ENCODE measurements at regions of chr10 and their contacts with region 1.

Region 1: DNA sequence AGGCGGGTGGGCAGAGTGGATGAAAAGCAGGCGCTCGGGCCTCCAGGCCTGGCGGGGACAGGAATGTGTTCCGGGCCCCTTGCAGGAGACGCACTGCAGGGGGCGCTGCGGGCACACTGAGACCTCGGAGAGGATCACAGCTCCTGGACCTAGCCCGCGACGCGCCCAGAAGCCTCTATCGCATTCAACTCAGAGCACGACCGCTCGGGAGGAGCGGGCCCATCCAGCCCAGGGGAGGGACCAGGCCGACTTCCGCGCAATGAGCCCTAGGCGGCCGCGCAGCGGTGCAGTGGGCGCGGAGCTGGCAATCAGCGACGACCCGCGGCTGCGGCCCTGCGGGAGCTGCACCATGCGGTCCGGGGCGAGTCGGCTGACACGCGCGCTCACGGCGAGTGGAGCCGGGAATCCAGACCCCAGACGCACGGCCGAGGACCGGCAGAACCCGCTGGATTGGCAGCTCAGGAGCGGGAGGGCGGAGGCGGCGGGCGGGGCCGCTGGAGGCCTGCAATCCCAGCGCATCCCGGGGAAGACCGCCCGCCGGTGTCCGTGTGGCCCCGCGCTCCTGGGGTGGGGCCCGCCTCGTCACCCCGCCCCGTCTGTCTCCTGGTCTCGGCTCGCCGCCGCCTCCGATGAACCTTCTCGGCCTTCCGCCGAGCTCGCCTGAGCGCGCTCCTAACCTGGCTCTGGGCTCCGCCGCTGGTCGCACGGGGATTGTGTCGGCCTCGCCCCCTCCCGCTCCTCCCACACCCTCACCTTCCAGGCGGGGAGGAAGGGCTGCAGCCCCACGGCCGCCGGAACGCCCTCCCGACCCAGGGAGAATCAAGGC is 33.5 kb upstream of the GRID1 start:
- DNase-seq: peak; percentile 88
- H3K4me3 ChIP-seq: peak overlapping the region; percentile 29 to 57 (median 48)
- H3K27ac ChIP-seq: no peak overlapping the region
- H3K4me1 ChIP-seq: peaks cover 23% of the 10 kb centered on the region
- H3K27me3 ChIP-seq: peaks cover 18% of the 10 kb centered on the region in 2 experiments
- CTCF ChIP-seq: peak; percentile 92 to 98
- POLR2A ChIP-seq: no peak

Region 2: GRCh38 chr10:86389441-86390193 is 10.5 kb before region 1 on chr10:
- CTCF ChIA-PET with region 1: interaction called, 31 read pairs
- POLR2A ChIA-PET with region 1: no interaction called
- dilution Hi-C with region 1: no loop called
- intact Hi-C with region 1: no loop called
- DNase-seq: peak; percentile 29
- H3K4me3 ChIP-seq: peak overlapping the region in 1 of 3 experiments; percentile 7
- H3K27ac ChIP-seq: no peak overlapping the region
- H3K4me1 ChIP-seq: no peaks in the 10 kb centered on the region
- H3K27me3 ChIP-seq: peaks cover 21 to 23% of the 10 kb centered on the region in 2 experiments
- CTCF ChIP-seq: no peak
- POLR2A ChIP-seq: no peak

Region 3: GRCh38 chr10:86411281-86411841 is 11.3 kb after region 1 on chr10:
- CTCF ChIA-PET with region 1: interaction called, 53 read pairs
- POLR2A ChIA-PET with region 1: no interaction called
- dilution Hi-C with region 1: no loop called
- intact Hi-C with region 1: no loop called
- DNase-seq: peak; percentile 64
- H3K4me3 ChIP-seq: no peak overlapping the region
- H3K27ac ChIP-seq: peak overlapping the region; percentile 73
- H3K4me1 ChIP-seq: peaks cover 17% of the 10 kb centered on the region
- H3K27me3 ChIP-seq: peaks cover 0 to 2% of the 10 kb centered on the region in 2 experiments
- CTCF ChIP-seq: no peak
- POLR2A ChIP-seq: no peak

Region 4: GRCh38 chr10:86521678-86522509 is 121.8 kb after region 1 on chr10 and contains the start of gene WAPL:
- CTCF ChIA-PET with region 1: interaction called, 6 read pairs
- POLR2A ChIA-PET with region 1: no interaction called
- dilution Hi-C with region 1: no loop called
- intact Hi-C with region 1: loop called (anchors 1 kb)
- DNase-seq: peak; percentile 96
- H3K4me3 ChIP-seq: peak within 1 kb of the TSS; percentile 96 to 99 (median 99)
- H3K27ac ChIP-seq: peak within 1 kb of the TSS; percentile 74
- H3K4me1 ChIP-seq: peaks cover 19% of the 10 kb centered on the region
- H3K27me3 ChIP-seq: no peaks in the 10 kb centered on the region
- CTCF ChIP-seq: no peak
- POLR2A ChIP-seq: peak; percentile 63
- total RNA-seq, gene WAPL: 35.1 and 35.3 TPM in 2 replicates